ENCODE measurements at regions of chr14 and their contacts with region 1.

Region 1: DNA sequence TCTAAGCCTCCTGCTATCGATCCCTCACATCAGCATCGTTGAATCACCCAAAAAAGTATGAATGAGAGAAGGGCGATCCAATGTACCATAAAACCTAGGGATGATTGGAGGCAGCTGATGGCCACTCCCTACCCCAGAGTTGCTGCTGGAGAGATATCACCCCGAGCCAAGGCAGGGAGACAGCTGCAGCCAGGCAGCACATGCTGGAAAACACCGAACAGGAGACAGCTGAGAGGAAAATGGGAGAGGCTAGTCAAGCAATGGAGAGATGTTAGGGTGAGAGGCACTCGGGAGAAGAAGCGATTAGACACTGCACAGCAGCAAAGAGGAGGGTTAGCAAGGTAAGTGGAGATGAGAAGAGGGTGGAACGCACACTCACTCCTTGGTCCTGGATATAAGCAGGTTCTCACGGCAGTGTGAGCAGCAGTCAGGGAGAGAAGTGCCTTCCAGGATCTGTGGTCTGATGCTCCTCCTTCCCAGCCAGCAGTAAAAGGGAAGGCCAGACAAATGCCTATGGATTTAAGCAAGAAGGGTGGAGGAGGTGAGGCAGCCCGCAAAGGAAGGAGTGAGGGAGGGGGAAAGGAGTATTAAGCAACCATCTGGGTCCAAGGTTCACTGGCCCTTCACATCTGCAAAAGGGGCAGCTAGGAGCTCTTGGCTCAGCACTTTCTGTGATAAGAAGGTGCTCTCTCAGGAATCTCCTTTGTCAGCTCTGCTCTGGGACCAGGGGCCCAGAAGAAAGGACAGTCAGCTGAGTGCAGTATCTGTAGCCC is at the start of gene SLC7A7:
- H3K4me3 Mint-ChIP-seq: peak within 1 kb of the TSS; percentile 84
- H3K27ac Mint-ChIP-seq: peak within 1 kb of the TSS; percentile 85
- H3K4me1 Mint-ChIP-seq: peaks cover 80% of the 10 kb centered on the region
- H3K27me3 Mint-ChIP-seq: no peaks in the 10 kb centered on the region

Region 2: GRCh38 chr14:22753586-22753985 is 61.5 kb before region 1 on chr14:
- intact Hi-C with region 1: no loop called
- H3K4me3 Mint-ChIP-seq: no peak overlapping the region
- H3K27ac Mint-ChIP-seq: no peak overlapping the region
- H3K4me1 Mint-ChIP-seq: peaks cover 25% of the 10 kb centered on the region
- H3K27me3 Mint-ChIP-seq: no peaks in the 10 kb centered on the region

Region 3: DNA sequence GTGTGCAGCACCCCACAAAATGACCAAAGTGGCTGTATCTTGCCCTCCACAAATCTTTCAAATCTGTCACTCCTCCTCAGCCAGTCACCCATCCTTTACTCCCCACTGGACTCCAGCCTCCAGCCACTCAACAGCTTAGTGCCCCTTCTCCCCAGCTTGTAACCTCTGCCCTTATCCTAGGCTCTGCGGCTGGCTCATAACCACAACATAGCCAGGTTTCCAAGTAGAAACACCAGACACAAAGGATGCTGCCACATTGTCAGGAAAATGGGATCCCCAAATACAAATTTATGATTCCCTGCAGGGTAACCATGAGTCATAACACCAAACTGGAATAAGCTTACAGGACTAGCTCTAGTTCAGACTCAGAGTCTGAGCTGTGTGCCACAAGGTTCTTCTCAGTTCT is 33.5 kb before region 1 on chr14:
- intact Hi-C with region 1: loop called (anchors 1 kb)
- H3K4me3 Mint-ChIP-seq: no peak overlapping the region
- H3K27ac Mint-ChIP-seq: peak overlapping the region; percentile 90
- H3K4me1 Mint-ChIP-seq: peaks cover 73% of the 10 kb centered on the region
- H3K27me3 Mint-ChIP-seq: no peaks in the 10 kb centered on the region

Measured in dendritic cell treated with granulocyte-macrophage colony-stimulating factor and Interleukin-4, amounts not matched to agents 40 ng/mL and 50 ng/mL, for 4 days (primary cell).